GM12878 (cell line): ENCODE measurements at regions of chr5 and their contacts with region 1.

Region 1: DNA sequence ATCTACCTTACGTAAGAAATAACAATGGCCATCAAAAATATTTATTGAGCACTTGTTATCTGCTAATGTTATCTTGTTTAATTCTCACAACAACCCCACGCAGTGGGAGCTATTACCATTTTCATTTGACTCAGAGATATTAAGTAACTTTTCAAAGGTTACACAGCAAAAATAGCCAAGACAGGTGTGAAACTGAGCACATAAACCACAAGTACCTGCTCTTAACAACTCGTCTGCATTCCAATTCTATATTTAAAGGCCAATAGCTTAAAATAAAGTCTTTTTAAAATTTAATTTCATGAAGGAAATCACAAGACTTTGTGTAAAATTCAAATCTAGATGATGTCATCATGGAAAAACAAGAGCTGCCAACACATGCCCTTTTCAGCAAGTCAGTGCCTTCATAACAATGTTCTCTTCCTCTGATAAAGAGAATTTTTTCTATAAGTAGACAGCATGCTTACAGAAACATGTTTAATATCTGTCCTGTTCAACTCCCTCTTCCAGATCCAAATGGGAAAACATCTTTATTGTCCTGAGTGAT is 111.6 kb downstream of the MED10 start:
- DNase-seq: no peak
- ATAC-seq: peak; percentile 43; the same call in 2 of the 3 replicates
- H3K4me3 ChIP-seq: no peak overlapping the region
- H3K27ac ChIP-seq: no peak overlapping the region
- H3K4me1 ChIP-seq: no peaks in the 10 kb centered on the region
- H3K27me3 ChIP-seq: no peaks in the 10 kb centered on the region
- CTCF ChIP-seq: no peak
- EP300 ChIP-seq: no peak
- POLR2A ChIP-seq: no peak
- RAD21 ChIP-seq: no peak

Region 2: DNA sequence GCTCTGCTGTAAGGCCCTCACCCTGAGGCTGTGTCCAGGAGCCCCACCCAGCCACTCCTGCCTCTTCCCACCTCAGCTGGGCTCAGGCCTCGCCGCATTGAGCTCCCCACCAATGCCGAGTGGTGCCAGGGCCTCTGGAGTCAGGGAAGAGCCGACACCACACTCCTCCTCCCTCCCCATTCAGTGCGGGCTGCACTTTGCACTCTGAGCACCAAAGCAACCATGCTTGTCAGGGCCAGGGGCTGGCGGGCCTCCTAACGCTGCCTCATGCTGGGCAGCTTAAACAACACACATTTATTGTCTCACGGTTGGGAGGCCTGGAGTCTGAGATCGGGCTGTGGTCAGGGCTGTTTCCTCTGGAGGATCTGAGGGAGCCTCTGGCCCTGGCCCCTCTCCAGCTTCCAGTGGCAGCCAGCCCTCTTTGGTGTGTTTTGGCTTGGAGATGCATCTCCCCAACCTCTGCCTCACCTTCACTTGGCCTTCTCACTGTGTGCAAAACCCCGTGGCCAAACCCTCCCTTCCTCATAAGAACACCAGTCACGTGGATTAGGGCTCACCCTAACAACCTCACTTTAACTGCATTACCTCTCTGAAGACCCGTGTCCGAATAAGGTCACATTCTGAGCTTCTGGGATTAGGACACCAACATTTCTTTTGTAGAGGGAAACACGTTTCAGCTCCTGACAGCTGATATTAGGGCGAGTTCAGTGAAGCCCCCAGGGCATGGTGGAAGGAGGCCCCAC is 46.2 kb before region 1 on chr5:
- CTCF ChIA-PET with region 1: no interaction called
- POLR2A ChIA-PET with region 1: no interaction called
- RAD21 ChIA-PET with region 1: no interaction called
- SMC1A ChIA-PET with region 1: interaction called, 12 read pairs
- in situ Hi-C with region 1: no loop called
- intact Hi-C with region 1: no loop called
- DNase-seq: no peak
- ATAC-seq: no peak
- H3K4me3 ChIP-seq: no peak overlapping the region
- H3K27ac ChIP-seq: no peak overlapping the region
- H3K4me1 ChIP-seq: no peaks in the 10 kb centered on the region
- H3K27me3 ChIP-seq: no peaks in the 10 kb centered on the region; a peak in 1 of 4 replicates
- CTCF ChIP-seq: no peak
- EP300 ChIP-seq: no peak
- POLR2A ChIP-seq: no peak
- RAD21 ChIP-seq: no peak

Region 3: DNA sequence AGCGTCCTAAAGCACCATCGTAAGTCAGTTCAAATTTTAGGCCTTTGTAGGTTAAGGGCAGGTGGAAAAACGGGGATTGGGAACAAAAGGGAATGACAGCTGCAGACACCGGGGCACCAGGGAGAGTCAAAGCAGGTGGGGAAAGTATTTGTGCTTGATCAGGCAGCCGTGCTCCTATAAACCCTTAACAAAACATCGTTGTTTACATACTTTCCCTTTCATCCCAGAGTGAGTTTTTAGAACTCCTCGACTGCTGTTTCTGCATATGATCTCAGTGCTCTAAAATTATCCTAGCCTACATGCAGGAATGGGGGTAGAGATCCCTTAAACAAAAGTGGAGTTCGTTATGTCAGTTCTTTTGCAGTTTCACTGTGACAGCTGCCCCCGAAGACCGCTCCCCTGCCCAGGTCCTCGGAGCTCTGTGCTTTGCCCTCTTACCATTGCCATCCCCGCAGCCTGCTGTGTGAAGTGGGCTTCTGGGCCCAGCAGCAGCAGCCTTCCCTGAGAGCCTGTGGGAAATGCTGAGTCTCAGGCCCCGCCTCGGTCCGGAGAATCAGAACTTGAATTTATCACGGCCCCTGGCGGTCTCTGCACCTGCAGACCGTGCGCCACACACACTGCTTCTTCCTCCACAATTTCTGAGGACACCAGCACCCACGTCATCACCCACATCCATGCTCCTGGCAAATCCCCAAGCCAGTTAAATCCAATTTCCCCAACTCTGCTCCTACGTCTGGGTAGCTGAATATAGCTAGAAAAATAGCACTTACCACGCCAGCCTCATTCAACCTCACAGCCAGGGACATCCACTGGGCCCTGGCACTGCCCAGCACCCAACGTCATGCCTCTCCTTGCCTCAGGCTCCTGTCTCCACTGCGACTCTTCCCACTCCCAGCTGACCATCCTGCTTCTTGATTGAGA is 279.3 kb after region 1 on chr5:
- CTCF ChIA-PET with region 1: no interaction called
- POLR2A ChIA-PET with region 1: no interaction called
- RAD21 ChIA-PET with region 1: no interaction called
- SMC1A ChIA-PET with region 1: no interaction called
- in situ Hi-C with region 1: no loop called
- intact Hi-C with region 1: no loop called
- DNase-seq: no peak
- ATAC-seq: no peak
- H3K4me3 ChIP-seq: no peak overlapping the region
- H3K27ac ChIP-seq: no peak overlapping the region
- H3K4me1 ChIP-seq: no peaks in the 10 kb centered on the region
- H3K27me3 ChIP-seq: peaks cover 0 to 1% of the 10 kb centered on the region in 2 experiments; a peak in 1 of 4 replicates
- CTCF ChIP-seq: no peak
- EP300 ChIP-seq: no peak
- POLR2A ChIP-seq: no peak
- RAD21 ChIP-seq: no peak